H1 (cell line): ENCODE measurements at regions of chr17 and their contacts with region 1.

Region 1: GRCh38 chr17:45148183-45149036 is at the start of gene HEXIM1:
- DNase-seq: peak; percentile 98 to 100
- H3K4me3 ChIP-seq: peak within 1 kb of the TSS; percentile 77 to 93 (median 88)
- H3K27ac ChIP-seq: peak within 1 kb of the TSS; percentile 99
- H3K4me1 ChIP-seq: peaks cover 3 to 17% (median 13%) of the 10 kb centered on the region in 4 experiments
- H3K27me3 ChIP-seq: no peaks in the 10 kb centered on the region
- CTCF ChIP-seq: no peak
- EP300 ChIP-seq: no peak
- POLR2A ChIP-seq: peak; percentile 99 to 100
- RAD21 ChIP-seq: no peak
- total RNA-seq, gene HEXIM1: 36.9 and 38.3 TPM in 2 replicates

Region 2: DNA sequence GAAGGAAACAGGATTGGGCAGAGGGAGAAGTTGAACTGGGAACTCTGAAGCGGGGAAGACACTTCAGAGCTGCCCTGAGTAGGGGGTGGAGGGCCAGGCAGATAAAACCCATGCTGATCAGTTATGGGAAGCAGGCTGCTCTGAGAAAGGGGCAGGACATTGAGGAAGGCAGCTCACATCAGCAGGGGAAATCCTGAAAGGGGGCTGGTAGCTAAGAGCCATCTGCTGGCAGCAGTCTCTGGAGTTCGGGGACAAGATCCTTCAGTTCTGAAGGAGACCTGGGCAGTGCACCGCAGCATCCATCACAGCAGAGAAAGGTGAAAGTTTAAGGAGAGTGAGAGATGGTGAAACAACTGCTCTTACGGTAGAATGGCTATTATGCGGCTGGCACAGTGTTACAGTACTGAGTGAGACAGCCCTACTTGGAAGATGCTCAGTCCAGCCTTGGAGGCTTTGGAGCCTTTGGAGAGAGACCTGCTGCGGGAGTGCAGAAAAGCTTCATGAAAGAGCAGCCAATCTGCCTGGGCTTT is 195.4 kb before region 1 on chr17:
- CTCF ChIA-PET with region 1: no interaction called
- POLR2A ChIA-PET with region 1: no interaction called
- DNase-seq: no peak
- H3K4me3 ChIP-seq: no peak overlapping the region
- H3K27ac ChIP-seq: no peak overlapping the region
- H3K4me1 ChIP-seq: no peaks in the 10 kb centered on the region; a peak in 1 of 7 replicates
- H3K27me3 ChIP-seq: peaks cover 0 to 7% (median 1%) of the 10 kb centered on the region in 4 experiments; a peak in 2 of 7 replicates
- CTCF ChIP-seq: peak; percentile 8 to 38 (median 31); a peak in 3 of 4 replicates
- EP300 ChIP-seq: no peak
- POLR2A ChIP-seq: no peak
- RAD21 ChIP-seq: peak; percentile 19 to 32; a peak in 3 of 4 replicates

Region 3: GRCh38 chr17:45115871-45116724 is 32.3 kb before region 1 on chr17:
- CTCF ChIA-PET with region 1: interaction called, 3 read pairs
- POLR2A ChIA-PET with region 1: interaction called, 10 read pairs
- DNase-seq: no peak
- H3K4me3 ChIP-seq: no peak overlapping the region
- H3K27ac ChIP-seq: no peak overlapping the region
- H3K4me1 ChIP-seq: peaks cover 0 to 9% (median 4%) of the 10 kb centered on the region in 4 experiments; a peak in 3 of 7 replicates
- H3K27me3 ChIP-seq: no peaks in the 10 kb centered on the region
- CTCF ChIP-seq: no peak
- EP300 ChIP-seq: no peak
- POLR2A ChIP-seq: no peak
- RAD21 ChIP-seq: no peak

Region 4: GRCh38 chr17:45172454-45173286 is 24.3 kb after region 1 on chr17:
- CTCF ChIA-PET with region 1: interaction called, 103 read pairs
- POLR2A ChIA-PET with region 1: interaction called, 1,076 read pairs
- DNase-seq: peak in 1 of 2 experiments; percentile 70
- H3K4me3 ChIP-seq: peak overlapping the region in 3 of 4 experiments; percentile 4 to 28 (median 10); a peak in 3 of 8 replicates
- H3K27ac ChIP-seq: peak overlapping the region; percentile 64
- H3K4me1 ChIP-seq: peaks cover 5 to 29% (median 26%) of the 10 kb centered on the region in 4 experiments
- H3K27me3 ChIP-seq: no peaks in the 10 kb centered on the region
- CTCF ChIP-seq: peak in 1 of 3 experiments; percentile 20; a peak in 1 of 4 replicates
- EP300 ChIP-seq: no peak
- POLR2A ChIP-seq: no peak
- RAD21 ChIP-seq: no peak

Region 5: DNA sequence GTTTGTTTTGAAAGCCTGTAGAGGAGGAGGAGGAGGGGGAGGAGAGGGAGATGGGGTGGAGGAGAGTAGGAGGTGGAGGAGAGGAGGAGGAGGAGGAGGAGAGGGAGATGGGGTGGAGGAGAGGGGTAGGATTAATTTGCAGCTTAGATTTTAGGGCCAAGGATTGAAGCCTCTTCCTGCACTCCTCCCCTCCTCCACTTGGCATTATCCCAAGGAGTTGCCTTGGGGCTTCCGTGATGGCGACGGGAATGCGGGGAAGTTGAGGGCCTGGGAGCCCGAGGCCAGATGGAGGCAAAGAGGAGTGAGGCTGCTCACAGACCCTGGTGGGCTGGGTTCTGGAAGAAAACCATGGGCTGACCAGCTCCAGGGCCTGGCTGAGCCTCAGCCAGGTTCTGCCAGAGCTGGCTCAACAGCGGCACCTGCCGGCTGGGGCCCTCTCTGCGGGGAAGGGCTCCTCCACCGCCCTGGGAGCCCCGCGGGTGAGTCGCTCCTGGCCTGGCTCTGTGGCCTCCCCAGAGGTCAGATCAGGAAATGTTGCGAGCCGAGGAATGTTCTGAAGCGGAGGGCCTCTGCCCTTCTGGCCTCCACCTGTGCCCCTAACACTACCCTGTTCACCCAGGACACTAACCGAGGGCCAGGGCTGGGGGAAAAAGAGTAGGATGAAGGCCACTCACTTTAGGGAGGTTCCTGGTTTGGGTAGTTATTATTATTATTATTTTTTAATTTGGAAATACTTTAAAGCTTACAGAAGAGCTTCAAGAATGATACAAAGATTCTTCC is 49.3 kb after region 1 on chr17:
- CTCF ChIA-PET with region 1: interaction called, 187 read pairs
- POLR2A ChIA-PET with region 1: interaction called, 199 read pairs
- DNase-seq: peak; percentile 90 to 100
- H3K4me3 ChIP-seq: peak overlapping the region in 1 of 4 experiments; percentile 35; a peak in 2 of 8 replicates
- H3K27ac ChIP-seq: no peak overlapping the region
- H3K4me1 ChIP-seq: peaks cover 2 to 9% (median 7%) of the 10 kb centered on the region in 4 experiments; a peak in 5 of 7 replicates
- H3K27me3 ChIP-seq: no peaks in the 10 kb centered on the region
- CTCF ChIP-seq: peak; percentile 97 to 99 (median 99)
- EP300 ChIP-seq: peak in 1 of 2 experiments; percentile 55; a peak in 1 of 3 replicates
- POLR2A ChIP-seq: 0 out of 3 replicates have a peak, but pooled peaks of 1 of the 2 experiments have one; percentile 48
- RAD21 ChIP-seq: peak; percentile 93 to 100

Region 6: DNA sequence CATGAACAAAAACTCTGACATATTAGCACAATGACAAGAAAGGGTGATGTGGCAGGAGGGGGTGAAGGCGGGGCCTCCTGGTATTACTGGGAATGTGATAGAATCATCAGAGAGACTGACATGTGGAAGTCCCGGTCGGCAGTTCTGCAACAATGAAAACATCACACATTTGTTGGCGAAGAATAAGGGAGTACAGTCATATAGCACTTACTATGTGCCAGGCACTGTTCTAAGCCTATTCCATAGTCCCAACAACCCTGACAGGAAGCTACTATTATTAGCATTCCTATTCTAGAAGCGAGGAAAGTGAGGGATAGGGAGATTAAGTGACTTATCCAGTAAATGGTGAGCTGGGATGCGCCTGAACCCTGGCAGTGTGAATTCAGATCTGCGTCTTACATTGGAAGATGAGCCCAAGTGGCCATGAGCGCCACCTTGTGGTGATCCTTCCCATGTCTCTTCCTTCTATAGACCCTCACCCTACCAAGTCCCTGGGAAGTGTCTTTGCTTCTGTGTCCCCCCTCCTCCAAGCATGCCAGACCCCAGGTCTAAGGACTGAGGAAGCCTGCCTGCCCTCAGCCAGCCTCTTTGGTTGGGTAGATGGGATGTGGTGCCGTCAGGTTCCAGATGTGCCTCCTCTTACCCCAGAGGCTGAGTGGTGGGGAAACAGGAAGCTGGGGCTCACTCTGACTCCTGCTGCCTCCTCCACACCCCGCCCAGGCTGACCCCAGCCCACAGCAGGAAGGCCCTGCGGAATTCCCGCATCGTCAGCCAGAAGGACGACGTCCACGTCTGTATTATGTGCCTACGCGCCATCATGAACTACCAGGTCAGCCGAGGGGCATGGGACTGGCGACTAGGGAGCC is 87.2 kb after region 1 on chr17:
- CTCF ChIA-PET with region 1: interaction called, 12 read pairs
- POLR2A ChIA-PET with region 1: interaction called, 24 read pairs
- DNase-seq: peak; percentile 80 to 92
- H3K4me3 ChIP-seq: 0 out of 8 replicates have a peak overlapping the region, but pooled peaks of 1 of the 4 experiments have one; percentile 12
- H3K27ac ChIP-seq: no peak overlapping the region
- H3K4me1 ChIP-seq: peaks cover 3 to 20% (median 10%) of the 10 kb centered on the region in 4 experiments
- H3K27me3 ChIP-seq: peaks cover 0 to 26% (median 12%) of the 10 kb centered on the region in 4 experiments; a peak in 6 of 7 replicates
- CTCF ChIP-seq: peak; percentile 81 to 95 (median 82)
- EP300 ChIP-seq: no peak
- POLR2A ChIP-seq: no peak
- RAD21 ChIP-seq: peak; percentile 47 to 63; a peak in 3 of 4 replicates

Region 7: DNA sequence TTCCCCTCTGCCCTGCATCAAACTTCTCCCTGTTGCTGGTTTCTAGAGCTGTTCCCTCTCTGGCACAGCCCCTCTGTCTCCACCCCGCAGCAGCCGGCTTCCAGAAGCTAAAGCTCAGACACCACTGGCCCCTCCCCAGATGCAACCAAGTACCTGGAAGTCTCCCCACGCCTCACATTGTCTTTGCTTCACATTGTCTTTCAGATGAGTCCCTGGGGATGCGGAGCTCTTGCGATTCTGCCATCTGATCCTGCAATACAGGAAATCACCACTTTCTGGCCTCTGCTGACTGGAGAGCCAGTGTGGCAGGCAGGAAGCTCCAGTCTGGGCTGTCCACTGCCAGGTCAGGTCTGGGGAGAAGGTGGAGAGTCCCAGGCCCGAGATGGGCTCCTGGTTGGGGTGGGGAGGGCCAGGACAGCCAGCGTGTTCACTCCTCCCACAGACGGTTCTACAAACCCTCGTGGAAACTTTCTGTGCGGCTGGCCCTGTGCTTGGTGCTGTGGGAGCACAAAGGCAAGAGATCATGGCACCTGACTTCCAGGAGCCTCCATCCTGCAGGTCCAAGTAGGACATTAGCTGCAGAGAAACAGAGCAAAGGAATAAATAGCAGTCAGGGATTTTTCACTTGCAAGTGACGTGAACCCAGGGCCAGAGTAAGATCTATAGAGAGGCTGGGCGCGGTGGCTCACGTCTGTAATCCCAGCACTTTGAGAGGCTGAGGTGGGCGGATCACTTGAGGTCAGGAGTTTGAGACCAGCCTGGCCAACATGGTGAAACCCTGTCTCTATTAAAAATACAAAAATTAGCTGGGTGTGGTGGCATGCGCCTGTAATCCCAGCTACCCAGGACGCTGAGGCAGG is 216.4 kb after region 1 on chr17:
- CTCF ChIA-PET with region 1: interaction called, 5 read pairs
- POLR2A ChIA-PET with region 1: interaction called, 10 read pairs
- DNase-seq: peak; percentile 75 to 89
- H3K4me3 ChIP-seq: peak overlapping the region in 1 of 4 experiments; percentile 36; a peak in 1 of 8 replicates
- H3K27ac ChIP-seq: peak overlapping the region; percentile 84; the same call in 1 of the 2 replicates
- H3K4me1 ChIP-seq: peaks cover 5 to 18% (median 10%) of the 10 kb centered on the region in 4 experiments
- H3K27me3 ChIP-seq: no peaks in the 10 kb centered on the region; a peak in 2 of 7 replicates
- CTCF ChIP-seq: peak in 1 of 3 experiments; percentile 31; a peak in 1 of 4 replicates
- EP300 ChIP-seq: peak in 1 of 2 experiments; percentile 30; a peak in 1 of 3 replicates
- POLR2A ChIP-seq: peak; percentile 42 to 62
- RAD21 ChIP-seq: peak; percentile 10 to 33; a peak in 2 of 4 replicates